ENCODE measurements at regions of chr14 and their contacts with region 1.

Region 1: DNA sequence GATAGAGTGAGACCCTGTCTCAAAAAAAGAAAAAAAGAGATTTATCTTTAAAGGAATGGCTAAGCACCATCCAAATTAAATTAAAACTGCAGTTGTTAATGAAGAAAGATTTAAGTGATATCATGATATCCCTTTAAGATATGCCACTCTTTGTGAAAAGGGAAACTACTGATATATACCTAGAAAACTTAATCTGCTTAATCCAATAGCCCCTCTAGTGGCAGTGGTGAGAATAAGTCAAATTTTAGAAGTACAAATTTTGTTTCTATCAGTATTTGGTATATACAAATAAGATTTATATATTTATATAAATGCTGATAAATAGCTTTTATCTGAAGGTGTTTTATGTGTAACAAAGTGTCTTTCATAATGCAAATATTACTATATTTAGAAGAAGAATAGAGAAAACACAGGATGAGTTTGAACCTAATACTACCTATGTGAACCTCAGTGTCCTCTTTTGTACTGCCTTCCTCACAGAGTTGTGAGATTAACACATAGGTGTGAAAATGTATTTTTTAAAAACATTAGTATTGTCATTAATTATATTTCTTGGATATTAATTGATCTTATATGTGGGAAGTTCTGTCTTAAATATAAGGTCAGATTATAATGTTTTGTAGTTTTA is 51.4 kb upstream of the GARIN2 start:
- DNase-seq: no peak
- H3K4me3 Mint-ChIP-seq: no peak overlapping the region
- H3K27ac Mint-ChIP-seq: no peak overlapping the region
- H3K4me1 Mint-ChIP-seq: peaks cover 25% of the 10 kb centered on the region
- H3K27me3 Mint-ChIP-seq: no peaks in the 10 kb centered on the region

Region 2: DNA sequence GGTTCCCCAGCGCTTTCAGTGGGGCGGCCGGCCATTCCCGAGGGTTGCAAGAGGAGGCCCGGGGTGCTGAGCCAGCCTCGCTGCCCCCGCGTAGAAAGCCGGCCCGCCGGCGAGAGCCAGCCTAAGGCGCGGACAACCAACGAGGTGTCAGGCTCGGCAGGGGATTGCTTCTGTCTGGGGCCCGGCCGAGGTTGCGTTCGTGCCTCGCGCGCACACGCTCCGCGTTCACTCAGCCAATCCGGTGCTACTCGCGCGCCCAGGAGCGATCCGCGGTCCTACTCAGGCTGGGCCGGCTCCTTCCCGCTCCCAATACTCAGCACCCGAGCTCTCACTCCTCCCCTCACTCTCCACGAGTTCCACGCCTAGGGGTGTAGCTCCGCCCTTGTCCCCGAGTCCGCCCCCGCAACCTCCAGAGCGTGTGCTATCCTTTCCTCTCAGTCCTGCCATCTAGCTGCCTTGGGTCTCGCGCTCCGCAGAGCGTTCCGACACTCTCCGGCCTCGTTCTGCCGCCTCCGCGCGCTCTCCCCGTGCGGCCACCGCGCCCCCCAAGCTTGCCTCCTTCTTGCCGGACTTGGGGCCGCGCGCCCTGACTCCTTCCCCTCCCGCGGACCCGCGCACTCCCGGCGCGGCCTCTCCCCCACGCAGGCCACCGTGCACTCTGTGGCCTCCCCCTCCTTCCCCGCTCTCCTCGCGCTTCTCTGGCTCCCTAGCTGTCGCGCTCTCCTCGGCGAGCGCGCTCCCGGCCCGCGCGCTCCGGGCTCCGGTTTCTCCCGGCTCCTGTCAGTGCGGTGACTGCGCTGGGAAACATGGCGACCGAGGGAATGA is 629.9 kb before region 1 on chr14 and contains the start of gene GPHN:
- CTCF ChIA-PET with region 1: interaction called, 3 read pairs
- POLR2A ChIA-PET with region 1: interaction called, 8 read pairs
- intact Hi-C with region 1: loop called (anchors 1 kb)
- DNase-seq: peak; percentile 95
- H3K4me3 Mint-ChIP-seq: peak within 1 kb of the TSS; percentile 89
- H3K27ac Mint-ChIP-seq: peak within 1 kb of the TSS; percentile 92
- H3K4me1 Mint-ChIP-seq: peaks cover 33% of the 10 kb centered on the region
- H3K27me3 Mint-ChIP-seq: peaks cover 4% of the 10 kb centered on the region
- total RNA-seq, gene GPHN: 19.5 to 23.1 TPM

Region 3: GRCh38 chr14:66649498-66649897 is 488.4 kb before region 1 on chr14:
- CTCF ChIA-PET with region 1: no interaction called
- POLR2A ChIA-PET with region 1: no interaction called
- intact Hi-C with region 1: loop called (anchors 2 kb)
- DNase-seq: peak; percentile 50
- H3K4me3 Mint-ChIP-seq: no peak overlapping the region
- H3K27ac Mint-ChIP-seq: peak overlapping the region; percentile 50
- H3K4me1 Mint-ChIP-seq: peaks cover 18% of the 10 kb centered on the region
- H3K27me3 Mint-ChIP-seq: no peaks in the 10 kb centered on the region

Region 4: GRCh38 chr14:66680216-66680615 is 457.6 kb before region 1 on chr14:
- CTCF ChIA-PET with region 1: no interaction called
- POLR2A ChIA-PET with region 1: no interaction called
- intact Hi-C with region 1: no loop called
- DNase-seq: no peak
- H3K4me3 Mint-ChIP-seq: no peak overlapping the region
- H3K27ac Mint-ChIP-seq: no peak overlapping the region
- H3K4me1 Mint-ChIP-seq: no peaks in the 10 kb centered on the region
- H3K27me3 Mint-ChIP-seq: no peaks in the 10 kb centered on the region

Region 5: DNA sequence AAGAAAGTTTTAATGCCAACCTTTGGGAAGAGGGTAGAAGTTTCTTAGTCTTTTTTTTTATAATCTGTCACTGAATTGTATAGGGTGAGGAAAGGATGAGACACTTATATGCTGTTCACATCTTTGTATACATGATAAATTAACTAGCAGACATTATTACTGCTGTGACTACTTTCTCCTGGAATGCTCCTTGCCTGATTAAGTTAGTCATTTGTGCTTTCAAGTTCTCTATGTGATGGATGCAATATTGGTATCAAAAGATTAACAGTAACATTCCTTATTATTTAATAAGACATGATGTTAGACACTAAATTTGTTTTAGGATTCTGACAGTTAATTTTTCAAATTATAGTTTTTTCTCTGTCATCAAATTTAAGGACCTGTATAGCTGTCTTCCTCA is 172.0 kb before region 1 on chr14:
- CTCF ChIA-PET with region 1: no interaction called
- POLR2A ChIA-PET with region 1: no interaction called
- intact Hi-C with region 1: no loop called
- DNase-seq: no peak
- H3K4me3 Mint-ChIP-seq: no peak overlapping the region
- H3K27ac Mint-ChIP-seq: no peak overlapping the region
- H3K4me1 Mint-ChIP-seq: no peaks in the 10 kb centered on the region
- H3K27me3 Mint-ChIP-seq: no peaks in the 10 kb centered on the region

Region 6: DNA sequence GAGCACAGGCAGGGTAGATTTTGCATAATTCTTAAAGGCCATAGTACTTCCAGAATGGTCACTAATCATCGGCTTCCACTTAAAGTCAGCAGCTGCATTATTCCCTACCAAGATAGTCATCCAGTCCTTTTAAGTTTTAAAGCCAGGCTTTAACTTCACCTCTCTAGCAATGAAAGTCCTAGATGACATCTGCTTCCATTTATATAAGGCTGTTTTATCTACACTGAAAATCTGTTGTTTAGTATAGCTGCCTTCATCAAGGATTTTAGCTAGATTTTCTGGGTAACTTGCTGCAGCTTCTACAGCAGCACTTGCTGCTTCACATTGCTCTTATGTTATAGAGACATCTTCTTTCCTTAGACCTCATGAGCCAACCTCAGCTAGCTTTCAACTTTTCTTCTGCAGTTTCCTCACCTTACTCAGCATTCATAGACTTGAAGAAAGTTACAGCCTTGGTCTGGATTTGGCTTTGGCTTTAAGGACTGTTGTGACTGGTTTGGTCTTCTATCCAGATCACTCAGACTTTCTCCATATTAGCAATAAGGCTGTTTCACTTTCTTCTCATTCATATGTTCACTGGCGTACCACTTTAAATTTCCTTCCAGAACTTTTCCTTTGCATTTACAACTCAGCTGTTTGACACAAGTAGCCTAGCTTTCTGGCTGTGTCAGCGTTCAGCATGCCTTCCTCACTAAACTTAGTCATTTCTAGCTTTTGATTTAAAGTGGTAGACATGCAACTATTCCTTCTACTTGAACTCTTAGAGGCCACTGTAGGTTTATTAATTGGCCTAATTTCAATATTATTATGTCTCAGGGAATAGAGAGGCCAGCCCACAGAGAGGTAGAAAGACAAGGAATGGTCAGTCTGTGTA is 158.5 kb before region 1 on chr14:
- CTCF ChIA-PET with region 1: no interaction called
- POLR2A ChIA-PET with region 1: no interaction called
- intact Hi-C with region 1: loop called (anchors 1 kb)
- DNase-seq: peak; percentile 13
- H3K4me3 Mint-ChIP-seq: no peak overlapping the region
- H3K27ac Mint-ChIP-seq: no peak overlapping the region
- H3K4me1 Mint-ChIP-seq: peaks cover 5% of the 10 kb centered on the region
- H3K27me3 Mint-ChIP-seq: no peaks in the 10 kb centered on the region

Region 7: GRCh38 chr14:67158566-67158965 is 20.7 kb after region 1 on chr14:
- CTCF ChIA-PET with region 1: interaction called, 3 read pairs
- POLR2A ChIA-PET with region 1: no interaction called
- intact Hi-C with region 1: loop called (anchors 1 kb)
- DNase-seq: no peak
- H3K4me3 Mint-ChIP-seq: no peak overlapping the region
- H3K27ac Mint-ChIP-seq: no peak overlapping the region
- H3K4me1 Mint-ChIP-seq: peaks cover 10% of the 10 kb centered on the region
- H3K27me3 Mint-ChIP-seq: no peaks in the 10 kb centered on the region